ENCODE measurements at regions of chr13 and their contacts with region 1.

Region 1: DNA sequence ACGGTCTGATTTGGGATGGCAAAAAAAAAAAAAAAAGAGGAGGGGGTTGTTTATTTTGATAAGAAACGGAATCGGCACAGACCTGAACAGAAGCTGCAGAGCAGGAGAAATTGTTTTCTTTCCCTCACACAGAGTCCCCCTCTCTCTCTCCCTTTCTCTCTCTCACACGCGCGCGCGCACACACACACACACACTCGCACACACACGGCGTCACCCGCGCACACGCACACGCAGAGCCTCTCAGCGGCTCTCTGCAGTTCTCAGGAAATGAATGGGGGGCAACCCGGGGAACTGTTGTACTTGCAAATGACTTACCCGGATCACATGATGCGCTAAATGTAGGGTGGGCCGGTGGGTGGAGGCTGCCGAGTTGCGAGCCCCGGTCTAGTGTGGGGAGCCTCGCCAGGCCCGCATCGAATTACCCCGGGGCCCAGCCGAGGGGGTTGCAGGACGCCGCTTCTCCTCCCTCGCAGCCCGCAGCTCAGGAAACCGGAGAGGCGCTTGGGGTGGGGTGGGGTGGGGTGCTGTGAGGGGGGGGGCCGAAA is 475 bp downstream of the KLF12 start:
- DNase-seq: peak; percentile 95
- ATAC-seq: peak; percentile 48
- H3K4me3 ChIP-seq: peak overlapping the region; percentile 82
- H3K27ac ChIP-seq: peak overlapping the region; percentile 95
- H3K4me1 ChIP-seq: peaks cover 11% of the 10 kb centered on the region
- H3K27me3 ChIP-seq: no peaks in the 10 kb centered on the region
- CTCF ChIP-seq: no peak
- POLR2A ChIP-seq: peak; percentile 76; the same call in 1 of the 2 replicates
- RAD21 ChIP-seq: no peak

Region 2: GRCh38 chr13:73835138-73835721 is 298.5 kb before region 1 on chr13:
- CTCF ChIA-PET with region 1: interaction called, 3 read pairs
- POLR2A ChIA-PET with region 1: no interaction called
- dilution Hi-C with region 1: no loop called
- in situ Hi-C with region 1: no loop called
- intact Hi-C with region 1: loop called (anchors 2 kb)
- DNase-seq: peak; percentile 56
- ATAC-seq: peak; percentile 79; the same call in 1 of the 2 replicates
- H3K4me3 ChIP-seq: no peak overlapping the region
- H3K27ac ChIP-seq: no peak overlapping the region
- H3K4me1 ChIP-seq: peaks cover 6% of the 10 kb centered on the region
- H3K27me3 ChIP-seq: no peaks in the 10 kb centered on the region
- CTCF ChIP-seq: peak; percentile 63
- POLR2A ChIP-seq: no peak
- RAD21 ChIP-seq: peak; percentile 70

Region 3: DNA sequence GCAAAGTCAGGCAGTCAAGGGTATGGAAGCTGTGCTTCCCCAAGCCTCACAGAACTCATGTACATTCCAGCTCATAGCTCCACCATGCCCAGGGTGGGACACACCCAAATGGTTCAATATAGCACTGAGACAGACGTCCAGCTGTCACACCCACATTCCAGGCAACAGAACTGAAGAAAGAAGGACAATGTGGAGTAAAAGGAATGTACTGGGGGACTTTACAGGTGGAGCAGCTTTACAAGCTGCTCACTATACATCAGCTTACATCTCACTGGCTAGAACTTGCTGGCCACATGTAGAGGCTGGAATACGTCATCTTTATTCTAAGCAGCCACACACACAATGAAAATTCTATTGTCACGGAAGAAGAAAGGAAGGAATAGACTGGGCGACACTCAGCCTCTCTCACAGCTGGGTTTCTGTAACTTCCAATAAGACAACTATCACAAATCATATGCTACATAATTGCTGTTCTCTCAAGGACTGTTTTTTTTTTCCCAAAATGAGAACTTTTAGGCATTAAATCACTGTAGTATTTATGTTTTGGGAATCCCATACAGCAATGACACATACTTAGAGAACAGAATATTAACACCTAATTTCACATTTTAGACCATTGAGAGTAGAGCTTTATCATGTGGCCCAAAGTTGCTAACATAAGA is 85.7 kb before region 1 on chr13:
- CTCF ChIA-PET with region 1: no interaction called
- POLR2A ChIA-PET with region 1: no interaction called
- dilution Hi-C with region 1: no loop called
- in situ Hi-C with region 1: no loop called
- intact Hi-C with region 1: loop called (anchors 5 kb)
- DNase-seq: no peak
- ATAC-seq: peak; percentile 71
- H3K4me3 ChIP-seq: no peak overlapping the region
- H3K27ac ChIP-seq: no peak overlapping the region
- H3K4me1 ChIP-seq: peaks cover 12% of the 10 kb centered on the region
- H3K27me3 ChIP-seq: no peaks in the 10 kb centered on the region
- CTCF ChIP-seq: no peak
- POLR2A ChIP-seq: no peak
- RAD21 ChIP-seq: no peak

Region 4: DNA sequence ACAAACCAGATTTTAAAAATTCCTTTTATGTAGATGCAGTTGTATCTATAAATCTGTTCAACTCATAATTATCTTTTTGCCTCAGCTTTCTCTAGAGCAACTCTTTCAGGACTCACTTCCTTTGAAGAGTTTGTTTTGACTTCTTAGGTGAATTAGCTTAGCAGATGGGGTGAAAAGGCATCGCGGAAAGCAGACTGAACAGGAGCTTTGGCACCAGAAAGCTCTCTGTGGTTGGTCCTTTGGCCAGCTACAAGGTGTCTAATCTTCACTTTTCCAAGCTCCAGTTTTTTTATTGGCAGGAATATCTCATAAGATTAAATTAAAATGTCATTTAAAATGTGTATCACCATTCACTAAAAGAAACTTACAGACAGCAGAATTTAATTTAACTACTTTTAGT is 61.1 kb after region 1 on chr13:
- CTCF ChIA-PET with region 1: no interaction called
- POLR2A ChIA-PET with region 1: no interaction called
- dilution Hi-C with region 1: no loop called
- in situ Hi-C with region 1: no loop called
- intact Hi-C with region 1: no loop called
- DNase-seq: no peak
- ATAC-seq: no peak; the same call in 1 of the 2 replicates
- H3K4me3 ChIP-seq: no peak overlapping the region
- H3K27ac ChIP-seq: no peak overlapping the region
- H3K4me1 ChIP-seq: peaks cover 3% of the 10 kb centered on the region; the same call in 1 of the 2 replicates
- H3K27me3 ChIP-seq: no peaks in the 10 kb centered on the region
- CTCF ChIP-seq: no peak
- POLR2A ChIP-seq: no peak
- RAD21 ChIP-seq: no peak

Region 5: GRCh38 chr13:74210693-74211393 is 77.1 kb after region 1 on chr13:
- CTCF ChIA-PET with region 1: interaction called, 5 read pairs
- POLR2A ChIA-PET with region 1: no interaction called
- dilution Hi-C with region 1: no loop called
- in situ Hi-C with region 1: no loop called
- intact Hi-C with region 1: loop called (anchors 5 kb)
- DNase-seq: peak; percentile 98
- ATAC-seq: peak; percentile 92
- H3K4me3 ChIP-seq: peak overlapping the region; percentile 4; the same call in 1 of the 2 replicates
- H3K27ac ChIP-seq: peak overlapping the region; percentile 79
- H3K4me1 ChIP-seq: peaks cover 14% of the 10 kb centered on the region
- H3K27me3 ChIP-seq: no peaks in the 10 kb centered on the region
- CTCF ChIP-seq: no peak
- POLR2A ChIP-seq: no peak
- RAD21 ChIP-seq: peak; percentile 9; the same call in 1 of the 2 replicates

Region 6: GRCh38 chr13:74443631-74444030 is 309.9 kb after region 1 on chr13:
- CTCF ChIA-PET with region 1: no interaction called
- POLR2A ChIA-PET with region 1: no interaction called
- dilution Hi-C with region 1: no loop called
- in situ Hi-C with region 1: no loop called
- intact Hi-C with region 1: loop called (anchors 5 kb)
- DNase-seq: peak; percentile 85
- ATAC-seq: peak; percentile 97
- H3K4me3 ChIP-seq: no peak overlapping the region
- H3K27ac ChIP-seq: no peak overlapping the region
- H3K4me1 ChIP-seq: peaks cover 4% of the 10 kb centered on the region; the same call in 1 of the 2 replicates
- H3K27me3 ChIP-seq: no peaks in the 10 kb centered on the region; the same call in 1 of the 2 replicates
- CTCF ChIP-seq: no peak
- POLR2A ChIP-seq: no peak
- RAD21 ChIP-seq: no peak

Region 7: DNA sequence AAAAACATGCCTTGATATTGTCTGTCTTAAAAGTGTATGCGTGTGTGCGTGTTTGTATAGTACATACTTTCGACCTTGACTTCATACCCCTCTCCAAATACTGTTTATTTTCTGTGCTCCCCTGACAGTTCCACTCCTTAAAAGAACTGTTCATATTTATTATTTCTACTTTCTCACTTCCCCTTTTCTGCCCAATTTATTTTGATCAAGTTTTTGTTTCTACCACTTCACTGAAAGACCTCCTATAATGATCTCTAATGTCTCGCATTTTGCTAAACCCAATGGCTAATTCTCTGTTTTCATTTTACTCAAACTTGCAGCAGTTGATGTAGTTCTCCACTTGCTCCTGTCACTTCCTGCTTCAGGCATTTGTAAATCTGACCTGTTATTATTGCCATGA is 426.6 kb after region 1 on chr13:
- CTCF ChIA-PET with region 1: no interaction called
- POLR2A ChIA-PET with region 1: no interaction called
- dilution Hi-C with region 1: no loop called
- in situ Hi-C with region 1: no loop called
- intact Hi-C with region 1: no loop called
- DNase-seq: no peak
- ATAC-seq: no peak
- H3K4me3 ChIP-seq: no peak overlapping the region
- H3K27ac ChIP-seq: no peak overlapping the region
- H3K4me1 ChIP-seq: no peaks in the 10 kb centered on the region
- H3K27me3 ChIP-seq: no peaks in the 10 kb centered on the region
- CTCF ChIP-seq: no peak
- POLR2A ChIP-seq: no peak
- RAD21 ChIP-seq: no peak

Region 8: DNA sequence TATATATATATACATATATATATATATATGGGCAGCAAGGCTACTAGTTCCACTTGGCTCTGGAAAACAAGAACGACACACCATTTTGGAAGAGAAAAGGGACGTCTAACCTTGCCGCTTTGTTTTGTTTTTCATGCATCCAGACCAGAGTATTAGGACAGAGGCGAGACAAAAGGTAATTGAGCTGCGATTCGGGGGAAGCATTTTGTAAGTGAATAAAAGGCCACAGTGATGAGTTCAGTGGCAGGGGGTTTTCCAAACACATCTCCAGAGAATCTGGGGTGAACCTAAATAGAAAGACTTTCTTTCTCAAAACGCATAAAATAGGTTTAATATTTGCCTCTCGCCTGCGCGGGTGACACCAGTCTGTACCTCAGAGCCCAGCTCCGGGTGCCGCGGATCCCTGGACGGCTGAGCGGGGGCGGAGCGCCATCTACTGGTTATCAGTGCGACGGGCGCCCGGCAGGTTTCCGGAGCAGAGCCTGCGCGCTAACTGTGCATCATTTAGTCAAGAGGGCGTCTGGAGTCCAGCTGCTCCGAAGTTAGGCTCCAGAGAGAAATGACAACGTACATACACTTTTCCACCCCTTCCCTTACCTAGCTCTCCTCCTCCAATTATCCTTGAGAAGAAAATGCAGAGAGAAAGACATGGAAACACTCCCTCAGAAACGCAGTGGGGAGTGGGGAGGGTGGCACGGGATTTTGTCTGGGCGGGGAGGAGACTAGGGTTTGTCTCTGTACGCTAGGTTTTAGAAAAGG is 1085.9 kb after region 1 on chr13:
- CTCF ChIA-PET with region 1: interaction called, 4 read pairs
- POLR2A ChIA-PET with region 1: no interaction called
- dilution Hi-C with region 1: no loop called
- in situ Hi-C with region 1: loop called (anchors 25 kb)
- intact Hi-C with region 1: loop called (anchors 1 kb)
- DNase-seq: peak; percentile 57
- ATAC-seq: peak; percentile 99
- H3K4me3 ChIP-seq: peak overlapping the region; percentile 24
- H3K27ac ChIP-seq: no peak overlapping the region
- H3K4me1 ChIP-seq: no peaks in the 10 kb centered on the region
- H3K27me3 ChIP-seq: peaks cover 19% of the 10 kb centered on the region
- CTCF ChIP-seq: peak; percentile 98
- POLR2A ChIP-seq: peak; percentile 52; the same call in 1 of the 2 replicates
- RAD21 ChIP-seq: peak; percentile 97

Measured in IMR-90 (cell line).